ENCODE measurements at regions of chr9 and their contacts with region 1.

Region 1: DNA sequence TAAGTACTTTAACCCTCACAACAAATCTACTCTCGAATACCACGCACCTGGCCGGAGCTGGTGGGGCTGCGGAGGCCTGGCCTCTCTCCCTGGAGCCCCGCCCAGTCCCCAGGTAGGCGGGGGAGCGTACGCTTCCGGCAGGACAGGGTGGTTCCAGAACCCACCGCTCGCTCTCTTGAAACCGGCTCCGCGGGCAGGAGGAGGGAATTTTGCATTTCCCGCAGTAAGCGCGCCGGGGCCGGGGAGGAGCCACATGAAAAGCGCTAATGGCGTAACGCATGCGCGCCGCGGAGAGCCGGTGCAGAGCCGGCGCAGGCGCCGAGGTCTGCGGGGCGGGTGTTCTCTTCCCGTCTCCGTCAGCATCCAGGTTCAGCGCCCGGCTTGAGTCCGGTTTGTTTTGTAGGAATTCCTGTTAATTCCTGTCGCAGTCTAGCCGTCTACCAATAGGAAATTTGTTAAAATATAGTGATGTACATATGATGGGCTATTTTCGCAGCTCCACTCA is 20.8 kb downstream of the CAVIN4 start:
- DNase-seq: peak; percentile 72 to 84 (median 80)
- ATAC-seq: peak; percentile 86
- H3K4me3 ChIP-seq: peak overlapping the region; percentile 65
- H3K4me3 Mint-ChIP-seq: peak overlapping the region; percentile 68 to 90 (median 82)
- H3K27ac ChIP-seq: peak overlapping the region; percentile 36
- H3K27ac Mint-ChIP-seq: peak overlapping the region in 8 of 9 donors; percentile 66 to 90 (median 78)
- H3K4me1 ChIP-seq: peaks cover 7 to 8% of the 10 kb centered on the region in 2 donors
- H3K4me1 Mint-ChIP-seq: peaks cover 12 to 30% (median 22%) of the 10 kb centered on the region in 7 donors
- H3K27me3 ChIP-seq: no peaks in the 10 kb centered on the region
- H3K27me3 Mint-ChIP-seq: peaks cover 0 to 27% (median 0%) of the 10 kb centered on the region in 5 donors

Region 2: DNA sequence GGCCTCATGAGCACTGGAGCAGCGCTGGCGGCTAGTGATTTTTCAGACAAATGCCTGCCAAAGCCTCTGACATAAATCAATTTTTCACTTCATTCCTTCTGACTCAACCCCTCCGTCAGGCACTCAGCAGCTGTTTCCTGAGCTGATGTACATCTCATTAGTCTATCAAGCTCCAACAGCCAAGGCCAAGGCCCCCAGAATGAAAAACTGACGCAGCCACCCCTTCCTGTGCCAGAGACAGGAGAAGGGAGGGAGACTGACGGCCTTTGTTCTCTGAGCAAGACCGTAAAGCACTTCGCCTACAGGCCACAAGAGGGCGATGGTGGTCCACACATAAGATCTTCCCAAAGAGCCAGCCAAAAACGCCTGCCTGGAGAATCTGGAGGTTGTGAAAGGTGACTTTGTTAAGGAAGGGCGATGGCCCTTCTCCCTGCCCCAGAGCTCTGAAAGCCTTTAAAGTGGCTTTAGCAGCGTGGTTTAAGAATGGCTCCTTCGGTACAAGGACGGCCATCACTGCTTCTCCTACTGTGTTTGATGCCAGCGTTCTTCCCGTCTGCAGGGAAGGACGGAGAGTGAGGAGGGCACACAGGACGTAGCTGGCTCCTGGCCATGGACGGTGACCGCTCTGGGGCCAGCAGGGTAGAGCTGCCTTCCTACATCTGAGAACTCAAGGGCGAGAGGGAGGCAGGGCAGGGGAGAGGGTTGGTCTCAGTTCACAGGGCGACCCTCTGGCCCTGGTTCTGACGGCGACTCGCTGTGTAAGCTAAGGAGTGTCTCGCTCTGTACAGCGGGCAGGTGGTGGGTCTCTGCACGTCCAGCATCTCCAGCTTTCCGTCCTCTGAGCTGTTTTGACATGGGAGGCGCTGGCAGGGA is 1414.0 kb before region 1 on chr9:
- CTCF ChIA-PET with region 1: no interaction called
- POLR2A ChIA-PET with region 1: no interaction called
- intact Hi-C with region 1: loop called (anchors 1 to 5 kb)
- DNase-seq: peak; percentile 50 to 75 (median 72)
- ATAC-seq: peak; percentile 91
- H3K4me3 ChIP-seq: no peak overlapping the region
- H3K4me3 Mint-ChIP-seq: peak overlapping the region in 7 of 10 donors; percentile 43 to 73 (median 50)
- H3K27ac ChIP-seq: no peak overlapping the region
- H3K27ac Mint-ChIP-seq: peak overlapping the region in 4 of 9 donors; percentile 40 to 69 (median 52)
- H3K4me1 ChIP-seq: peaks cover 0 to 3% of the 10 kb centered on the region in 2 donors
- H3K4me1 Mint-ChIP-seq: peaks cover 0 to 43% (median 19%) of the 10 kb centered on the region in 7 donors
- H3K27me3 ChIP-seq: peaks cover 0 to 3% of the 10 kb centered on the region in 2 donors
- H3K27me3 Mint-ChIP-seq: peaks cover 0 to 18% (median 7%) of the 10 kb centered on the region in 5 donors

Region 3: DNA sequence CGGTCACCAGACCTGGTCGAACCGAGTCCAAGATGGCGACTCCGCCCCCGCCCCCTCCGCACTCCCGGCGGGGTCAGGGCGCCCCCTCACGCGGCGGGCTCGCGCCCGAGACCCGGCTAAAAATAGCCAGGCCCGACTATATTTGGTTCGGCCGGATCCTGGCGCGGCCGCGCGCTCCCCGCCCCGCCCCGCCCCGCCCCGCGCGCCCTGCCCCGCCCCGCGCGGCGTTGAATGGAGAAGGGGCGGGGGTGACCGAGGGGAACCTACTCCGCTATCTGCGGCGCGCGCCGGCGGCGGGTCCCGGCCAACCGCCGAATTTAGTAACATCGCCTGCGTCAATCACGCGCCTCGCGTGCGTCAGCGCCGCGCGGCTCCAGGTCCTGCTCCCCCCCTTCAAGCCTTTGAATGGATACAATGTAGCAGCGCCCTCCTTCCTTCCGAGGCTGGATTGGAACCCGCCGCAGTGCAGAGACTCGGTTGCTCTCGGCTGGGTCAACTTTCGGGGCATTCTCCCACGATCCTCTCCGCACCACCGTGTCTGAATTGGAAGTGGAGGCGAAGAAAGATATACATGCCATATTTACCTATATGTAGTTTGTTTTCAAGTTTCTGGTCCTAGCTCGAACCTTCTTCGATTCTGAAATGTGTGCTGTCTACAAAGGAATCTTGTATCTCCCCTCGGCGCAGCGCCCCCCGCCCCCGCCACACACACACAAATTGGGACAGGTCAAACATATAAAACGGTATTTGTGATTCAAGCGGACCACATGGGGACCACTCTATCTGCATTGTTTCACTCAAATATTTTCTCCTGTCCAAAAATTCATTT is 778.6 kb before region 1 on chr9:
- CTCF ChIA-PET with region 1: no interaction called
- POLR2A ChIA-PET with region 1: no interaction called
- intact Hi-C with region 1: loop called (anchors 2 to 5 kb)
- DNase-seq: peak; percentile 89 to 97 (median 94)
- ATAC-seq: peak; percentile 78
- H3K4me3 ChIP-seq: peak overlapping the region; percentile 85
- H3K4me3 Mint-ChIP-seq: peak overlapping the region; percentile 87 to 98 (median 96)
- H3K27ac ChIP-seq: peak overlapping the region; percentile 95
- H3K27ac Mint-ChIP-seq: peak overlapping the region; percentile 75 to 100 (median 99)
- H3K4me1 ChIP-seq: peaks cover 25 to 44% of the 10 kb centered on the region in 2 donors
- H3K4me1 Mint-ChIP-seq: peaks cover 24 to 54% (median 48%) of the 10 kb centered on the region in 7 donors
- H3K27me3 ChIP-seq: peaks cover 6 to 21% of the 10 kb centered on the region in 2 donors
- H3K27me3 Mint-ChIP-seq: peaks cover 19 to 67% (median 29%) of the 10 kb centered on the region in 5 donors

Region 4: DNA sequence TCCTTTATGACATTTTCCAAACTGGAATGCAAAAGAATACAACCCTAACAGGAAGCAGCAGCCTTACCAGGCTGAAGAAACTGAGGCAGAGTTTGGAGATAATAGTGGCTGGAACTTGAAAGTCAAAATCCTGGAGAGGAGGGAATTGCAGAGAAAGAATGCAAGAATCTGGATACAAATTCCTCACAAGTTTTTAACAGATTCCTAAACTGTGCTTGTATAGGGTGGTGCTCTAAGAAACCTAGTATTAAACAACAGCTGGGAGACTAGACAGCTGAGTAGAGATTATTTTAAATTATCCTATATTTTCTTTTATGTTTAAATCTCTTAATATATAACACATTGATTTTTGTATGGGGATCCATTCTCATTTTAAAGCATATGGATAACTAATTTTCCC is 468.9 kb before region 1 on chr9:
- CTCF ChIA-PET with region 1: no interaction called
- POLR2A ChIA-PET with region 1: no interaction called
- intact Hi-C with region 1: loop called in 1 of 2 experiments (anchors 10 kb)
- DNase-seq: no peak
- ATAC-seq: no peak
- H3K4me3 ChIP-seq: no peak overlapping the region
- H3K4me3 Mint-ChIP-seq: no peak overlapping the region
- H3K27ac ChIP-seq: no peak overlapping the region
- H3K27ac Mint-ChIP-seq: no peak overlapping the region
- H3K4me1 ChIP-seq: no peaks in the 10 kb centered on the region
- H3K4me1 Mint-ChIP-seq: peaks cover 0 to 11% (median 2%) of the 10 kb centered on the region in 7 donors
- H3K27me3 ChIP-seq: no peaks in the 10 kb centered on the region
- H3K27me3 Mint-ChIP-seq: no peaks in the 10 kb centered on the region

Region 5: DNA sequence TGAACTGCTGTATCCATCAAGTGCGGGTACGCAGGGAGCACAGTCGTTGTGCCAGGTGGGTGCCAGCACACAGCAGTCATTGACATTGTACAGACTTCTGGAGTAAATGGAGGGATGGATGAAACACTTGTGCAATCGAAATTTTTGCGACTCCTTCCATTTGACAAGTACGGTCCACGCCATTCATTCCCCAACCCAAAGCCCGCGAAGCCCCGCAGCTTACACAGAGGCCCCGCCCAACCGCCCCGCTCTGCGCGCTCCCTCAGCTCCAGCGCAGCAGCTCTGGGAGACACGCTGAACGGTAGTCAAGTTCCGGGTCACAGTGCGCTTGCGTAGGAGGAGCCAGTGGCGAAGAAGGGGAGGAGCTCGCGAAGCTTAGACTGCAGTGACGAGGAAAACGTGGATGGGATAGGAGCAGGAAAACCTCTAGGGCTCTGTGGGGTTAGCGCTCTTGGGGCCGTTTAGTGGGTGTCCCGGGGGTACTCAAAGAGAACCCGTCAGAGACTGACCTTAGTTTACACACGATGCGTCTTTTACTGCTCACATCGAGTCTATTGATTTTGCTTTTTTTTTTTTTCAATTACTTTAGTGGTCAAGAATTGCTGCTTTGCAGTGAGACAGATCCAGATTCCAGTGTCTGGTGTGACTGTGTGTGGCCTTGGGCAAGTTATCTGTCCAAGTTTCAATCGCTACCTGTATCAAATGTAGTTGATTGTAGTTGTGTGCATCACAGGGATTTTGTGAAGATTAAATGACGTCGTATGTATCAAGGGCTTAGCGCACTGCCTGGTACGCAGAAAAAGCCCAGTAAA is 187.0 kb before region 1 on chr9:
- CTCF ChIA-PET with region 1: no interaction called
- POLR2A ChIA-PET with region 1: no interaction called
- intact Hi-C with region 1: loop called (anchors 5 kb)
- DNase-seq: peak; percentile 58 to 87 (median 80)
- ATAC-seq: peak; percentile 100
- H3K4me3 ChIP-seq: peak overlapping the region; percentile 91
- H3K4me3 Mint-ChIP-seq: peak overlapping the region; percentile 83 to 98 (median 89)
- H3K27ac ChIP-seq: peak overlapping the region; percentile 55
- H3K27ac Mint-ChIP-seq: peak overlapping the region; percentile 56 to 90 (median 84)
- H3K4me1 ChIP-seq: peaks cover 10 to 15% of the 10 kb centered on the region in 2 donors
- H3K4me1 Mint-ChIP-seq: peaks cover 10 to 16% (median 13%) of the 10 kb centered on the region in 7 donors
- H3K27me3 ChIP-seq: no peaks in the 10 kb centered on the region
- H3K27me3 Mint-ChIP-seq: peaks cover 6 to 21% (median 15%) of the 10 kb centered on the region in 5 donors

Region 6: DNA sequence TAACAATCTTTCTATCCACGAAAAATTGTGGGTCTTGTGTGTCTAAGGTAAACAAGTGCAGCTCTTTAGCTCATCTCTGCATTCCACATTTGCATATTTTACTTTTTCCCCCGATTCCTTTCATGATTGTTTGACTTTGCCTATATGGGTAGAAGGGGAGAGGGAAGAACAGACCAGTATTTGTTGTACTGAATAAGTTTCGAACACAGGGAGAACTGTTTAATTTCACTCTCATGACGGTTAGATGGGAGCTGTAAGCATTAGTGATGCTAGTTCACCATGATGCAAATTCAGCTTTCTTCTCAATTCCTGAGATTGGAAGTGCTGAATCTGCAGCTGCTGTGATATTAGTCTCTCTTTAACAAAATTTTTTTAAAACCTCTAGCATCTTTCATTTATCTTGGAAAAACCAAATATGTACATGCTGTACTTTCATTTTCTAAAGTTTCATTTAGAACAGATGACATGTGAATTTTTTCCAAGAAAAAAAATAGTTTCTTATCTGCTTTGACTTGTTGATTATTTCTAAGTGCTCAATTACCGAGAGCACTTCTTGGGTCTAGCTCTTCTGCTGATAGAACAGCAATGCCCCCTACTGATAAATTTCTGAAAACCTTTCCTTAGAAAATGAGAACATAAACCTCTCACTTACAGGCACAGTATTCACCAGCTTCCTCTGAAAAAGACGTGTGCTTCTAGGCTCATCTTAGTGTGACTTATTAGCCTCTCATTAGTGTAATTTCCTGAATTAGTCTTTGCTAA is 636.6 kb after region 1 on chr9:
- CTCF ChIA-PET with region 1: no interaction called
- POLR2A ChIA-PET with region 1: no interaction called
- intact Hi-C with region 1: loop called in 1 of 2 experiments (anchors 2 kb)
- DNase-seq: no peak
- ATAC-seq: no peak
- H3K4me3 ChIP-seq: no peak overlapping the region
- H3K4me3 Mint-ChIP-seq: no peak overlapping the region
- H3K27ac ChIP-seq: no peak overlapping the region
- H3K27ac Mint-ChIP-seq: no peak overlapping the region
- H3K4me1 ChIP-seq: no peaks in the 10 kb centered on the region
- H3K4me1 Mint-ChIP-seq: no peaks in the 10 kb centered on the region
- H3K27me3 ChIP-seq: no peaks in the 10 kb centered on the region
- H3K27me3 Mint-ChIP-seq: peaks cover 0 to 20% (median 14%) of the 10 kb centered on the region in 5 donors